WTC11 (cell line): ENCODE measurements at regions of chr7 and their contacts with region 1.

Region 1: GRCh38 chr7:80134536-80135320 is at the start of gene GNAI1:
- DNase-seq: peak; percentile 80
- ATAC-seq: peak; percentile 81
- H3K4me3 Mint-ChIP-seq: peak within 1 kb of the TSS; percentile 99
- H3K27ac Mint-ChIP-seq: peak within 1 kb of the TSS; percentile 88
- H3K4me1 Mint-ChIP-seq: peaks cover 47% of the 10 kb centered on the region
- H3K27me3 Mint-ChIP-seq: peaks cover 15% of the 10 kb centered on the region
- CTCF ChIP-seq: peak; percentile 13; the same call in 1 of the 2 replicates
- total RNA-seq, gene GNAI1: 26.7 to 31.0 TPM (median 31.0 TPM) in 3 replicates

Region 2: DNA sequence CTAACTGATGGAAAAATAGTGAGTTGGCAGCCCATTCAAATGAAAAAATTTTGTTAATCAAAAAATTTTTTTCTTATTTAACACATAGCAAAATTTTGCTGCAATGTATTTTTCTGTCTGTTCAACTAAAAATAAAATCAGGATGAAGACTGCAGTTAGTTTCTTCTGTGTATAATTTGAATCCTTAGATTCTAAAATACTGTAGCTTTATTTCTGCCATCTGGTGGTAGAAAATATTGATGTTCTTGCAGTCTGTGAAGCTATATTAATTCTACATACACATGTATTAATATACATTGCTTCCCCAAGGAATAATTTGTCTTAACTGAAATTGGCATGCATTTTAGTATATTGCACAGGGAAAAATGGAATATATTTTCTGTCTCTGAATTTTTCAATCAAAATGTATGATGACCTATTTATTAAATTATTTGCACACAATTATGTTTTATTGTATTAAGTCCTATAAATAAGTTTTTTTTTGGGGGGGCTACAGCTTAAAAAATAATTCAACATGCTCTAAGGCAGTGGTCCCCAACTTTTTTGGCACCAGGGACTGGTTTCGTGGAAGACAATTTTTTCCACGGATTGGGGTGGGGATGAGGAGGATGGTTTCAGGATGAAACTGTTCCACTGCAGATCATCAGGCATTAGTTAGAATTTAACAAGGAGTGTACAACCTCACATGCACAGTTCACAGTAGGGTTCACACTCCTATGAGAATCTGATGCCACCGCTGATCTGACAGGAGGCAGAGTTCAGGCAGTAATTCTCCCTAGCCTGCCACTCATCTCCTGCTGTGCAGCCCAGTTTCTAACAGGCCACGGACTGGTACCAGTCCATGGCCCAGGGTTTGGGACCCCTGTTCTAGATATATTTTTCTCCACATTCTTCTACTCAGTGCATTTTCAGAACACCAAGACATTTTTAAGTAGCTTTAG is 257.8 kb after region 1 on chr7:
- CTCF ChIA-PET with region 1: interaction called, 11 read pairs
- POLR2A ChIA-PET with region 1: no interaction called
- DNase-seq: no peak
- ATAC-seq: no peak
- H3K4me3 Mint-ChIP-seq: no peak overlapping the region
- H3K27ac Mint-ChIP-seq: no peak overlapping the region
- H3K4me1 Mint-ChIP-seq: peaks cover 3% of the 10 kb centered on the region
- H3K27me3 Mint-ChIP-seq: no peaks in the 10 kb centered on the region
- CTCF ChIP-seq: no peak